IMR-90 (cell line): ENCODE measurements at regions of chr6 and their contacts with region 1.

Region 1: GRCh38 chr6:107033126-107033525 is 5.1 kb downstream of the MTRES1 start:
- DNase-seq: peak; percentile 8
- ATAC-seq: no peak
- H3K4me3 ChIP-seq: no peak overlapping the region
- H3K27ac ChIP-seq: no peak overlapping the region
- H3K4me1 ChIP-seq: peaks cover 4% of the 10 kb centered on the region
- H3K27me3 ChIP-seq: no peaks in the 10 kb centered on the region
- CTCF ChIP-seq: no peak
- POLR2A ChIP-seq: no peak
- RAD21 ChIP-seq: no peak

Region 2: DNA sequence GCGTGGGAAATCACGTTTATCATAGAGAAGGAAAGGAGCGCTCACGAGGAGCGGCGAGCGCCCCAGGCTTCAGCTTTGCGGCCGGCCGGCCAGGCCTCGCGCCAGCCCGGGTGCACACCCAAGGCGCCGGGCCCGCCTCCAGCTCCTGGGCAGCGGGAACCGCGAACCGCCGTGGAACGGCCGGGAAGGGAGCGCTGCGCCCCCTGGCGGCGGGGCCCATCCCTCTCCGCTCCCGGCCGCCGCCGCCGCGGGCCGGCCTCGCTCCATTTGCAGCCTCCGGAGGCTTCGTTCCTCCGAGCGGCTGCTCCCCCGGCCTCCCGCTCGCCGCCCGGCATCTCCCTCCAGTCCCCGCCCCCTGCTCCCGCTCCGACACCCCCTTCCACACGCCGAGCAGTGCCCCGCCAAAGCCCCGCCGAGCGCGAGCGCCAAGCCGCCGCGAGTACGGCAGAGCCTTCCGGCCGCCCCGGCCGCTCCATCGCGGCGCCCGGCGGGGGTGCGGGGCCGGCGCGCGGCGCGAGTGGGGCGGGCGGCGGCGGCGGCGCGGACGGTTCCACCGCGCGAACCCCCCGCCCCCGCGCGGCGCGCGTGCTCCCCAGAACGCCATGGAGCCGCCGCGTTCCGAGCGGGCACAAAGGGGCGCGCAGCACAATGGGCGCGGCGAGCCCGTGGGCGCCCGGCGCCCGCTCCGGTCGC is 81.2 kb after region 1 on chr6:
- CTCF ChIA-PET with region 1: interaction called, 4 read pairs
- POLR2A ChIA-PET with region 1: no interaction called
- dilution Hi-C with region 1: no loop called
- in situ Hi-C with region 1: no loop called
- intact Hi-C with region 1: loop called (anchors 1 kb)
- DNase-seq: peak; percentile 81
- ATAC-seq: peak; percentile 86
- H3K4me3 ChIP-seq: peak overlapping the region; percentile 98
- H3K27ac ChIP-seq: peak overlapping the region; percentile 53; the same call in 1 of the 2 replicates
- H3K4me1 ChIP-seq: no peaks in the 10 kb centered on the region
- H3K27me3 ChIP-seq: peaks cover 3% of the 10 kb centered on the region; the same call in 1 of the 2 replicates
- CTCF ChIP-seq: peak; percentile 91
- POLR2A ChIP-seq: no peak
- RAD21 ChIP-seq: peak; percentile 70

Region 3: DNA sequence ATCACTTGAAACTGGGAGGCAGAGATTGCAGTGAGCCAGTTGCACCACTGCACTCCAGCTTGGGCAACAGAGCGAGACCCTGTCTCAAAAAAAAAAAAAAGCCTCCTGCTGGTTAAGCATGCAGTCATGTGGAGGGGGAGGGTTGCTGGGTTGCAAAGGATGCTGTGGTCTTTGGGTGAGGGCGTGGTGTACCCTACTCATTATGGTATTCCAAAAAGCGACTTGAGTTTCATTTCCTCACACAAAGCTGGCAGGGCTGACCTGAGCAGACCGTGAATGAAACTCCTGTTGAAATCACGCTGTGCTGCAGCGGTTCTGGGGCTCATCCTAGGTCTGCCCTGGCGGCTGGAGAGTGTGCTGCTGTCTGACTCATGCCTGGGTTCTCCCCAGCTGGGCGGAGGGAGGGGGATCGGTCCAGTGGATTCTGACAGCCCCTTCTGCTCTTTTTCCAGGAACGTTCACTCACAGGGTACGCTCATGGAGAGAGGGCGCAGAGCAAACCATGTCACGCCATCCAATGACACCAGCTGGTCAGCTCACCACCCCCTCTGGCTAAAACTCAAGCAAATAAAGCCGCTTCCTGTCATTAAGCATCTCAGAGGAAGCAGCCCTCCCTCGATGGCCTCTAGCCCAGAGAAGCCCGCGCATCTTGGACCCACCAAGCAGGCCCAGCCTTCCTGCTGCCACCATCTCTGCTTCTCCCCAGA is 624.8 kb after region 1 on chr6:
- CTCF ChIA-PET with region 1: no interaction called
- POLR2A ChIA-PET with region 1: no interaction called
- dilution Hi-C with region 1: no loop called
- in situ Hi-C with region 1: no loop called
- intact Hi-C with region 1: loop called (anchors 2 kb)
- DNase-seq: peak; percentile 86
- ATAC-seq: peak; percentile 90
- H3K4me3 ChIP-seq: peak overlapping the region; percentile 4; the same call in 1 of the 2 replicates
- H3K27ac ChIP-seq: peak overlapping the region; percentile 79
- H3K4me1 ChIP-seq: peaks cover 27% of the 10 kb centered on the region
- H3K27me3 ChIP-seq: no peaks in the 10 kb centered on the region
- CTCF ChIP-seq: peak; percentile 48
- POLR2A ChIP-seq: no peak
- RAD21 ChIP-seq: peak; percentile 43

Region 4: DNA sequence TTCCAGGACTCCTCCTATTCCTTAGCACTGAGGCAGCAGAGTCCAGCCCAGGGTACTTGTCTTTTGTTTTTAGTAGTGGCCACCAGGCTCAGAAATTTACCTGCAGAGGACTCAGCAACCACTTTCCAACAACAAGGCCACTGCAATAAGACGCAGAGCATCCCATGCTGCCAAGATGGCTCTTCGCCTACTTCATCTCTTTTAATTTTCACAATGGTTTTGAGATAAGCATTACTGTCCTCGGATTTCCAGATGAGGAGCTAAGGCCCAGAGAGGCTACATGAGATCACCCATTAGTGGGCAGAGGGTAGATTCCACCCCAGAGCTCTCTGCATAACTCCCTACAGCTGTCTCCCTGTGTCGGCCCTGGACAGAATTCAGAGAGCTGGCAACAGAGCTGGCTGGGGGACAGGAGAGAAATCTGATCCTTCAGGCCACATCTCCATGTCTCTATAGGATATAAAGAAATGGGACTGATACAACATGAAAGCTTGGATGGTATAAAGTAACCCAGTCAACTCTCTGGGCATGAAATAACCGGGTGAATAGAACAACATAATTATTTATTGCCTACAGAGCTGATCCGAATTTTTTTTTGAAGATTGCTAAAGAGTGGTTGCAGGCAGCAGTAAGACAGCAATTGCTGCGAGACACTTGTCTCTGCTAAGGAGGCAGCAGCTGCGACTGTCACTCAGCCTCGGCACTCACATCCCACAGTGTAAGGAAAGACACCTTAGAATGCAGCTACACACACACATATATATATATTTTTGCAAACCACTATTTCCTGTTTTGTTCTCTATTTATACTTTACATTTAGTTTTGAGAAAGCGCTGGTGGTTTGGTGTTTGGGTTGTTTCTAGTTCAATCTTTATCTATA is 753.8 kb after region 1 on chr6:
- CTCF ChIA-PET with region 1: no interaction called
- POLR2A ChIA-PET with region 1: no interaction called
- dilution Hi-C with region 1: no loop called
- in situ Hi-C with region 1: no loop called
- intact Hi-C with region 1: no loop called
- DNase-seq: no peak
- ATAC-seq: no peak
- H3K4me3 ChIP-seq: no peak overlapping the region
- H3K27ac ChIP-seq: no peak overlapping the region
- H3K4me1 ChIP-seq: peaks cover 2% of the 10 kb centered on the region; the same call in 1 of the 2 replicates
- H3K27me3 ChIP-seq: peaks cover 30% of the 10 kb centered on the region
- CTCF ChIP-seq: no peak
- POLR2A ChIP-seq: no peak
- RAD21 ChIP-seq: no peak